ENCODE measurements at regions of chr5 and their contacts with region 1.

Region 1: DNA sequence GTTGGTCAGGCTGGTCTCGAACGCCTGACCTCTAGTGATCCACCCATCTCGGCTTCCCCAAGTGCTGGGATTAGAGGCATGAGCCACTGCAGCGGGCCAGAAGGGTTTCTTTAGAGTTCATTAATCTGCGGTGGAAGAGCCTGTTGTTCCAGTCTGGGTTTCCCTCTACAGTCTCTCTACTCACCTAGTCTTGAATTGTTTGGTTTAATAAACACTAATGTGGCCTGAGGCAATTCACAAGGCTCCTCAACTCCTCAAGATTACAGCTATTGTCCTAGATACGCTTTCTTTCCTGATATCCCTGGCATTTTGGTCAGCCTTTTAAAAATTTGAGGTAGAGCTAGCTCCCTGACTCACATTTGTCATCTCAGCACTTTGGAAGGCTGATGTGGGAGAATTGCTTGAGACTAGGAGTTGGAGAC is 4.5 kb upstream of the SAR1B start:
- DNase-seq: no peak

Region 2: DNA sequence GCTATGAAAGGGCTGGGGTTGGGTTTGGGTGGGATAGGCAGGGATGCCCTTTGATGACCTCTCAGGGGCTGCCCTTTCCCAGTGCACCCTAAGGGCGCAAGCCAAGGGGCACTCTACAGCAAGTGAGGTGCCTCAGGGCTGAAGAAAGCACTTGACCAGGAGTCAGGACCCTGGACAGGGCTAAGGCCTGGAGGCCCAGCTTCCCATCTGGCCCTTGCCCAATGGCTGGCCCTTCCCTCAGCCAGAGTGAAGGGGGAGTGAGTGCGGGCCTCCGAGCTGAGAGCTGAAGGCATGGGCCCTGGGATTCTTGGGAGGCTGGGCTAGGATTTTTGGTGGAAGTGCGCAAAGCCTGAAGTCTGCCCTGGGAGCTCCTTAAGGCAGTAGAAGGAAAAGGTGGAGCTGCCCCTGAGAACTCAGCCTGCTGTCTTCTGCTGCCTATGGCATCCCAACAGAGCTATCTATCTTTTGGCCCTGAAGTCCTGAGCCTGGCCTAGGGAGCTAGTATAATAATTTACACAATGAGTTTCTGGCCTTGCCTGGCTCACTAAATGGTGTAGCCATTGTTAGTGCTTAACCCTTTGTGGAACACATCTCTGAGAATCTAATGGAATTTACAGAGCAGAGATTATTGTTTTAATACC is 95.3 kb before region 1 on chr5:
- intact Hi-C with region 1: no loop called
- DNase-seq: peak in 4 of 10 donors; percentile 25 to 81 (median 72)

Region 3: DNA sequence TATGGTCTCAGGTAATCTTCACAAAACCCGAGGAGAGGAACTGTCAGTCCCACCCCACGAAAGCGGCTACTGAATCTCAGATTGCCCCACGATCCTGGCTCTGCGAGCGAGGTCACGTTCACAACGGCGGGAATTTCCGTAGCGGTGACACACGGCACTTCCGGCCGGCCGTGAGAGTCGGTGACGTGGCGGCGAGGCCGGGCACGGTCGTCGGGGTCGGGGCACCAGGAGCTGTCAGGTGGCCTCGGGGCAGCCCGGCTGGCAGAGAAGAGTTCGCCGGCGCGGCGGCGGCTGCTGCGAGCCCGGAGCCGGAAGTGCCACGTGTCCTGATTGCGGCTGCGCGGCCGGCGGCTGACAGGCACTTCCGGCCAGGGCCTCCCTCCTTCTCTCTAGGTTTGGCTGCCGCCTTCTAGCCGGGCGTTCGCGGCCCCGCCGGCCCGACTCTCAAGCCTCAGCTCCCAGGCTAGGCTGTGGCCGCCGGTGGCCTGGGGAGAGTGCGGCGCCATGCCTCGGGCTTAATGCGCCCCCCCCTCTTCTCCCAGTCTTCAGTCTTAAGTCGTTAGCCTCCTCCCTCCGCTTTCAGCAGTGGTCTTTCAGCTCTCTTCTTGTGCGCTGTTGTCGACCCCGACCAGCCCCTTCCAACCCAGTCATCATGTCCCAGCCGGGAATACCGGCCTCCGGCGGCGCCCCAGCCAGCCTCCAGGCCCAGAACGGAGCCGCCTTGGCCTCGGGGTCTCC is 11.4 kb after region 1 on chr5 and contains the start of gene SEC24A:
- intact Hi-C with region 1: loop called (anchors 1 kb)
- DNase-seq: peak; percentile 69 to 97 (median 82)

Measured in posterior cingulate gyrus (tissue), 11 donors.